Heart right ventricle (tissue), 16 donors: ENCODE measurements at regions of chr2 and their contacts with region 1.

Region 1: DNA sequence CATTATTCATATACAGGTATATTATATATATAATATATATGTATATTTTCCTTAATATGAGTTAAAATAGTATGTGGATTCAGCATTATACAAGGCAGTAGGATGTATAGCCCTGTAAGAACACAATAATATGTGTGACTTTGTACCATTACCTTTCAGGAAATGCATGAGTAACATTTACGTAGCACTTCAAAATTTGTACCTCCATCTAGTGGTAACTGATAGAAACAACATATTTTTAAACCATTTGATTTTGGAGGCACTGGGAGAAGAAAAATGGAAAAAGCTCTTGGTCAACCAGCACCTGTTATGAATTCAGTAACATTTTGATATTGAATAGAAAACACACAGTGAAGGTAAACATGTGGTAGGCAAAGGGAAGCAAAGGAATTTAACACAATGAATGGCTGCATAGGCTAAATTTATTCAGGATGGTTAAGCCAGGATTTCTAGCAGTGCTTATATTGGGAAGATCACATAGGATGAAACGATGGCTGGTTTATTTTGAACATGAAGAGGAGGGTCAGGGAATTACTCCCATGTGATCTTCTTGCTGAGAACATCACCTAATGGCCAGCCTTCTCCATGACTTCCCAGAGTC is 565.5 kb downstream of the CCDC85A start:
- DNase-seq: no peak
- ATAC-seq: no peak
- H3K4me3 ChIP-seq: no peak overlapping the region
- H3K27ac ChIP-seq: no peak overlapping the region
- H3K4me1 ChIP-seq: no peaks in the 10 kb centered on the region
- H3K27me3 ChIP-seq: no peaks in the 10 kb centered on the region
- CTCF ChIP-seq: peak; percentile 43 to 76 (median 60)

Region 2: DNA sequence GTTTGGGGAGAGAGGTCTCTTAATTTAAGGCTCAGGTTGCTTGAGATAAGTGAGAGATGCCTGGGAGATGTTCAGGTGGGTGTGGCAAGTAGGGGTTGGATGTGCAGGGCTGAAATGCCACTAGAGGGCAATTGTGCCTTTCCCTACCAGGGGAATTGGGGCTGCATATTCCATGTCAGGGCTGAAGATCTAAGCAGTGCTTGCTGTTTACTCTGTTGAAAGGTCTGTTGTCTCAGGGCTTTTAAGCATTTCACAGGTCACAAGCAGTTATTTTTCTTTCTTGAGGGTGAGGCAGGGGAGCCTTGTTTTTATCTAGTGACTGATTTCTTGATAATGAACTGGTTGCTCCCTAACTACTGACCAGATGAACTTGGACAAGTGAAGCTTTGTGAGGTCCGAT is 557.6 kb before region 1 on chr2:
- intact Hi-C with region 1: loop called in 3 of 10 experiments (anchors 5 to 10 kb)
- DNase-seq: peak in 1 of 2 donors; percentile 24
- ATAC-seq: peak in 7 of 8 donors; percentile 44 to 87 (median 80)
- H3K4me3 ChIP-seq: no peak overlapping the region
- H3K27ac ChIP-seq: no peak overlapping the region
- H3K4me1 ChIP-seq: peaks cover 0 to 52% (median 0%) of the 10 kb centered on the region in 9 donors
- H3K27me3 ChIP-seq: peaks cover 0 to 16% (median 0%) of the 10 kb centered on the region in 7 donors
- CTCF ChIP-seq: peak; percentile 26 to 70 (median 58)

Region 3: GRCh38 chr2:56288838-56289580 is 460.2 kb before region 1 on chr2:
- intact Hi-C with region 1: loop called in 2 of 10 experiments (anchors 5 to 10 kb)
- DNase-seq: no peak
- ATAC-seq: peak in 3 of 8 donors; percentile 33 to 54 (median 47)
- H3K4me3 ChIP-seq: no peak overlapping the region
- H3K27ac ChIP-seq: peak overlapping the region in 1 of 10 donors; percentile 3
- H3K4me1 ChIP-seq: peaks cover 0 to 29% (median 0%) of the 10 kb centered on the region in 9 donors
- H3K27me3 ChIP-seq: no peaks in the 10 kb centered on the region
- CTCF ChIP-seq: peak in 7 of 9 donors; percentile 20 to 57 (median 34)

Region 4: DNA sequence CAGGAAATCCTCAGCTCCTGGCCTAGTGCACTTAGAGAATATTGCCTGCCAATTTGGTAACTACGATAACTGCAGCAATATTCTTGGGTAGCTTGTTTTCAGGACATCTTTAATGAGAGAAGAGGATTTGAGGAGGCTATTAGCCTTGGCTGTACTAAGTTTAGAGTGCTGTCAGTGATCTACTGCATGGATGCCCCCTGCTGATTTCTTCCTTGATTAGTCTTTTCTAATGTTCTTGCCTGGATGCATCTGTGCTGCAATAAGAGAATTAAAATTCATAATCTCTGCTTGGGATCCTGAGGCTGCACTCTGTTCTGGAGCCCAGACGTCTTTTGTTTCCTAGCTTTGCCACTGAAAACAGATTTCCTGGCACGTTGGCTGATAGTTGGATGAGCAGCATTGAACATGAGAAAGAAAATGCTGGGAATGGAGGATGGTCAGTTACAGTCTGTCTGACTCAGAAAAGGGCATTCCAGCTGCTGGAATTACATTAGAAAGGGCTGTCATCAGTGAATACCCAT is 450.0 kb before region 1 on chr2:
- intact Hi-C with region 1: loop called in 1 of 10 experiments (anchors 10 kb)
- DNase-seq: no peak
- ATAC-seq: no peak
- H3K4me3 ChIP-seq: no peak overlapping the region
- H3K27ac ChIP-seq: no peak overlapping the region
- H3K4me1 ChIP-seq: peaks cover 0 to 16% (median 8%) of the 10 kb centered on the region in 9 donors
- H3K27me3 ChIP-seq: no peaks in the 10 kb centered on the region
- CTCF ChIP-seq: no peak

Region 5: DNA sequence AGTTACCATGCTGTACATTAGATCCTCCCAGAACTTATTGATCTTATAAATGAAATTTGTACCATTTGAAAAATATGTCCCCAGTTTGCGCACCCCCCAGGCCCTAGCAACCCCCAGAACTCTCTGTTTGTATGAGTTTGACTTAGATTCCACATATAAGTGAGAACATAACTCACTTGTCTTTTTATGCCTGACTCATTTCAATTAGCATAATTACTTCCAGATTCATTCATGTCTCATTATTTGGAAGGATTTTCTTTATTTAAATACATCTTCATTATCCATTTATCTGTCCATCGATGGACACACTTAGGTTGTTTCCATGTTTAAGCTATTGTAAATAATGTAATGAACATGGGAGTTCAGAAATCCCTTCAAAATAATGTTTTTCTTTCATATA is 140.5 kb after region 1 on chr2:
- intact Hi-C with region 1: no loop called
- DNase-seq: no peak
- ATAC-seq: no peak
- H3K4me3 ChIP-seq: no peak overlapping the region
- H3K27ac ChIP-seq: no peak overlapping the region
- H3K4me1 ChIP-seq: no peaks in the 10 kb centered on the region
- H3K27me3 ChIP-seq: no peaks in the 10 kb centered on the region
- CTCF ChIP-seq: no peak